Caco-2 (cell line): ENCODE measurements at regions of chr19 and their contacts with region 1.

Region 1: DNA sequence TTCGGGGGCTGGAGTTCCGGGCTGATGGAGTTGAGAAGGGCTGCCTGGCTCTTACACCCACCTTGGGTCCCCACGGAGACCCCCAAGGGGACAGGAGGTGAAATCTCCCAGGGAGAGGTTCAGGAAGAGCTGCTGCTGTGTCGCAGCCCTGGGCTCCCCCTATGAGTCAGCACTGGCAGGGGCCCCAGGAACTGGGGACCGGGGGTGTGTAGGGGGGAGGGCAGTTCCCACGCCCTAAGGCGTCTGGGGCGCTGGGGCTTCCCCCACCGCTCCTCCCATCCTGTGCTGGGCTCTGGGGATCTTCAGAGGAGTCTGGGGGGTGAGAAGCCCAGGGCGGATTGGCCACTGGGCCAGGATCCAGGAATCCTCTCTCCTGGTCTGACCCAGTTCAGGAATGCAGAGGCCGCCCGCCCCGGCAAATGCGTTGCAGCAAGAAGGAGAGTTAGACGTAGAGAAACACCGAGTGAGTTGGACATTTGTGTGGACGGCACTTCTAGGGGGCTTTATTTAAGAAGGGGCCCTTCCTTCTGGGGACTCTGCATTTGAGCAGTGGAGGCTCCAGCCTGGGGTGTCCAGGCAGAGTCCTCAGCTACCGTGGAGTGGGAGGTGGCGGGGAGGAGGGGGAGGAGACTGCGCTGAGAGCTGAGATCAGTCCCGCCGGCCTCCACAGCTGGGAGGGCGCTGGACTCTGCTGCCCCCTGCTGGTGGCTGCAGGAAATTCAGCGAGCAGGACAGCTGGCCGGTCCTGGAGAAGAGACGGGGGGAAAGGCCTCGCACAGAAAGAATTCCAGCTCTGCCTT is 15.0 kb upstream of the NANOS3 start:
- DNase-seq: peak; percentile 90 to 94
- H3K4me3 ChIP-seq: peak overlapping the region; percentile 33
- H3K4me3 Mint-ChIP-seq: peak overlapping the region; percentile 83
- H3K27ac Mint-ChIP-seq: peak overlapping the region; percentile 95
- H3K4me1 ChIP-seq: peaks cover 21% of the 10 kb centered on the region
- H3K4me1 Mint-ChIP-seq: peaks cover 24% of the 10 kb centered on the region
- H3K27me3 ChIP-seq: no peaks in the 10 kb centered on the region
- H3K27me3 Mint-ChIP-seq: peaks cover 6% of the 10 kb centered on the region
- CTCF ChIP-seq: peak; percentile 90 to 97

Region 2: GRCh38 chr19:13574933-13575332 is 287.0 kb before region 1 on chr19:
- CTCF ChIA-PET with region 1: no interaction called
- POLR2A ChIA-PET with region 1: no interaction called
- intact Hi-C with region 1: no loop called
- DNase-seq: peak in 1 of 2 experiments; percentile 3
- H3K4me3 ChIP-seq: no peak overlapping the region
- H3K4me3 Mint-ChIP-seq: no peak overlapping the region
- H3K27ac Mint-ChIP-seq: no peak overlapping the region
- H3K4me1 ChIP-seq: no peaks in the 10 kb centered on the region
- H3K4me1 Mint-ChIP-seq: no peaks in the 10 kb centered on the region
- H3K27me3 ChIP-seq: no peaks in the 10 kb centered on the region
- H3K27me3 Mint-ChIP-seq: peaks cover 10% of the 10 kb centered on the region
- CTCF ChIP-seq: peak in 1 of 2 experiments; percentile 20

Region 3: DNA sequence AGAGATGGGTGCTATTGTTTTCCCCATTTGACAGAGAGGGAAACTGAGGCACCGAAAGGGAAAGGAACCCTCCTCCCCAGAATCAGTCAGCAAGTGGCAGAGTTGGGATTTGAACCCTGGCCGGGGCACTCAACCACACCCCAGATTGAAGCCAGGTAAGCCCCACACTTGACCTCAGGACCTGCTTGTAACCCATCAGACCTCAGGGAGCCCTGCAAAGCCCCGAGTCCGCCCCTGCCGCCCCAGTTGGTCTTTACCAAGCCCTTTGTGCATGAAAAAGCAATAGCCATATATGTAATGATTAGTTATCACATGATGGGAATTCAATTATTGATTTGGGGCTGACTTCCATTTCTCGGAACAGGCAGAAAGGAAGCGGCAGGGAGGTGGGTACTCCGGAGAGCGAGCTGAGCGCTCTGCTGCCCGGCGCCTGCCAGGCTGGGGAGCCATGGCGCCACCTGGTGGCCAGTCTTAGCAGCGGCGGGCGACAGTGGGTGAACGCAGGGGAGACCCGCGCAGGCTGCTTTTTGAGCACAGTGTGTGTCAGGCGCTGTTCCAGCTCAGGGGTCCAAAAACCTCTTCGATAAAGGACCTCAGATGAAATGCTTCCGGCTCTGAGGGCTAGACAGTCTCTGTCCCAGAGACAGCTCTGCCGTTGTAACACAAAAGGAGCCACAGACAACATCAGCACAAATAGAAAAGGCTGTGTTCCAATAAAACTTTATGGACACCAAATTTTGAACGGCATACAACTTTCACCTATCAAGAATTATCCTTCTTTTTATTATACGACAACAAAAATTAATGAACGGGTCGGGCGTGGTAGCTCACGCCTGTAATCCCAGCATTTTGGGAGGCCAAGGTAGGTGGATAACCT is 272.7 kb before region 1 on chr19:
- CTCF ChIA-PET with region 1: no interaction called
- POLR2A ChIA-PET with region 1: interaction called, 16 read pairs
- intact Hi-C with region 1: no loop called
- DNase-seq: peak; percentile 61 to 81
- H3K4me3 ChIP-seq: no peak overlapping the region
- H3K4me3 Mint-ChIP-seq: no peak overlapping the region
- H3K27ac Mint-ChIP-seq: no peak overlapping the region
- H3K4me1 ChIP-seq: no peaks in the 10 kb centered on the region
- H3K4me1 Mint-ChIP-seq: no peaks in the 10 kb centered on the region
- H3K27me3 ChIP-seq: no peaks in the 10 kb centered on the region
- H3K27me3 Mint-ChIP-seq: peaks cover 3% of the 10 kb centered on the region
- CTCF ChIP-seq: peak; percentile 85 to 91

Region 4: GRCh38 chr19:13784731-13785452 is 77.0 kb before region 1 on chr19:
- CTCF ChIA-PET with region 1: interaction called, 26 read pairs
- POLR2A ChIA-PET with region 1: no interaction called
- intact Hi-C with region 1: loop called (anchors 1 kb)
- DNase-seq: peak; percentile 64 to 75
- H3K4me3 ChIP-seq: no peak overlapping the region
- H3K4me3 Mint-ChIP-seq: no peak overlapping the region
- H3K27ac Mint-ChIP-seq: peak overlapping the region; percentile 48
- H3K4me1 ChIP-seq: peaks cover 4% of the 10 kb centered on the region; the same call in 1 of the 2 replicates
- H3K4me1 Mint-ChIP-seq: peaks cover 13% of the 10 kb centered on the region
- H3K27me3 ChIP-seq: no peaks in the 10 kb centered on the region
- H3K27me3 Mint-ChIP-seq: no peaks in the 10 kb centered on the region
- CTCF ChIP-seq: peak; percentile 76 to 78

Region 5: DNA sequence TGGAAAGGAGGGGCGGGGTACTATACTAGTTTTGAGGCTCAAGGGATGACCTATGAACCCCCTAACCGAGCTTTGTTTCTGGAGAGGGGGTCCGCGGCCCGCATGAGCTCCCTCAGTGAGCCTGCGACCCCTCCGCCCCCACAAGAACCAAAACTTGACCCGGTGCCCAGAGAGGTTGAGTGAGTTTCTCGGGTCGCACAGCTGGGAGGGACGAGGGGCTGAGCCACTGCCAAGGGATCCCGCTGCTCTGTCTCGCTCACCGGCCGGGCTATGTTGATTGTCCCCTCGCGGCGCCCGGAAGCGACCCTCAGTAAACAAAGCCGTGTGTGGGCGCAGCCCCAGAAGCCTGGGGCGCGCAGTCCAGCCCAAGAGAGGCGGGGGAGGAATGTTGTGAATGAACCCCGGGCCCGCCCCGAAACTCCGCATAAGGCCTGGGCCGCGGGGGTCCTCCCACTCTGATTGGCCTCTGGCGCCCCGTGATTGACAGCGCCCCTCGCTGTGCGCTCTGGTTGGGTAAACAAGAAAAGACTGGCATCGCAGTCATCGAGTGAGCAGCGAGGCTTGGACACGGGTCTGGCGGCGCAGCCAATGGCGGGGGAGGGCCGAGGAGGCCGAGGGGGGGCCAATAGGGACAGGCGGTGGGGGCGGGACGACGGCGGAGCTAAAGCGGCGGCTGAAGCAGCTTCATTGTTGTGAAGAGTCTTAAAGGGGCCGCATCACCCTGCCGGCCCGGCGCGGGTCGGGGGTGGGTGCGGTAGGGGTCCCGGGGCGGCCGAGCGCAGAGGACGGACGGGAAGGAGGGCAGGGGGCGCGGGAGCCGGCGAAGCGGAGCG is 67.0 kb before region 1 on chr19 and contains the start of gene ZSWIM4:
- CTCF ChIA-PET with region 1: interaction called, 10 read pairs
- POLR2A ChIA-PET with region 1: interaction called, 4 read pairs
- intact Hi-C with region 1: no loop called
- DNase-seq: peak; percentile 98 to 99
- H3K4me3 ChIP-seq: peak within 1 kb of the TSS; percentile 80
- H3K4me3 Mint-ChIP-seq: peak within 1 kb of the TSS; percentile 97
- H3K27ac Mint-ChIP-seq: peak within 1 kb of the TSS; percentile 99
- H3K4me1 ChIP-seq: no peaks in the 10 kb centered on the region
- H3K4me1 Mint-ChIP-seq: peaks cover 9% of the 10 kb centered on the region
- H3K27me3 ChIP-seq: no peaks in the 10 kb centered on the region
- H3K27me3 Mint-ChIP-seq: no peaks in the 10 kb centered on the region
- CTCF ChIP-seq: no peak
- total RNA-seq, gene ZSWIM4: 4.0 and 5.7 TPM in 2 replicates

Region 6: DNA sequence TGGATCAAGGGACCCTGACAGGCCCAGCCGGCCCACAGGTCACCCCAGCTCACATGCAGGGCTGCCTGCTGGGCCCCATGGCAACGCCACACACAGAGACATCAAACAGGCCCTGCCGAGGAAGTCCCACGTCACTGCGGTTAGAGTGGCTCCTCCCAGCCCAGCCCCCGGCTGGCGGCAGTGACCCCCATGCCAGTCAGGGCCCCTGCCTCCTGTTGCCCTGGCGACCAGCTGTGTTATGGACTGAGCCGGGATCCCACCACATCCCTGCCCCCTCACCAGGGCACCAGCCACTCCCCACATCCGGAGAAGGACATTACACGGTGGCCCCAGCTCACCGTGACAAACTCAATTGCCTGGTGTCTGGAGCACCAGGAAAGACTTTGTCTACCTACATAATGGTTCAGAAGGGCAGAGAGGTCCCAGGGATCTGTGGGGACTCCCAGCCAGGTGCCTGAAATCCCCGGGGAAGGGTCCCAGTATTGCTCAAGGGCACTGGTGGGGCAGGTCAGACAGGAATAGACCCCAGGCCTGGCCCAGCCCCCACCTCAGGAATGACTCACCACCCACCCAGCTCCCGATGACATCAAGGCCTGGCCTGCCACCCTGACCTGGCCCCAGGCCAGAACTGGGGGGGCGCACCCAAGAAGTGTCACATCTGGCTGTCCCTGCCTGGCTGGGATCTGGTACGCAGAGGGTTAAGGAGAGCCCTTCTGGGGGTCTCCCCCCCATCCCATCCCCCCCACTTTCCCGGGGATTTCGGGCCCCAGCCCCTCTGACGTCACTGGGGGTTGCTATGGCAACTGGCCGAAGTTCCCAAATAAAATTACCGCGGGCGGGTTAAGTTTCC is 15.2 kb before region 1 on chr19:
- CTCF ChIA-PET with region 1: interaction called, 5 read pairs
- POLR2A ChIA-PET with region 1: interaction called, 44 read pairs
- intact Hi-C with region 1: loop called (anchors 1 kb)
- DNase-seq: peak; percentile 91 to 92
- H3K4me3 ChIP-seq: peak overlapping the region; percentile 64
- H3K4me3 Mint-ChIP-seq: peak overlapping the region; percentile 66
- H3K27ac Mint-ChIP-seq: peak overlapping the region; percentile 93
- H3K4me1 ChIP-seq: peaks cover 55% of the 10 kb centered on the region
- H3K4me1 Mint-ChIP-seq: peaks cover 30% of the 10 kb centered on the region
- H3K27me3 ChIP-seq: no peaks in the 10 kb centered on the region
- H3K27me3 Mint-ChIP-seq: no peaks in the 10 kb centered on the region
- CTCF ChIP-seq: no peak

Region 7: GRCh38 chr19:14437568-14438140 is 575.7 kb after region 1 on chr19:
- CTCF ChIA-PET with region 1: interaction called, 10 read pairs
- POLR2A ChIA-PET with region 1: no interaction called
- intact Hi-C with region 1: no loop called
- DNase-seq: no peak
- H3K4me3 ChIP-seq: no peak overlapping the region
- H3K4me3 Mint-ChIP-seq: no peak overlapping the region
- H3K27ac Mint-ChIP-seq: no peak overlapping the region
- H3K4me1 ChIP-seq: peaks cover 15% of the 10 kb centered on the region
- H3K4me1 Mint-ChIP-seq: peaks cover 9% of the 10 kb centered on the region
- H3K27me3 ChIP-seq: no peaks in the 10 kb centered on the region
- H3K27me3 Mint-ChIP-seq: no peaks in the 10 kb centered on the region
- CTCF ChIP-seq: no peak